Activated CD4-positive, alpha-beta T cell treated with anti-CD3 and anti-CD28 coated beads, Interleukin-2, amount 10 ng/mL, durations not matched to agents 24 days and 14 days (primary cell): ENCODE measurements at regions of chr5 and their contacts with region 1.

Region 1: DNA sequence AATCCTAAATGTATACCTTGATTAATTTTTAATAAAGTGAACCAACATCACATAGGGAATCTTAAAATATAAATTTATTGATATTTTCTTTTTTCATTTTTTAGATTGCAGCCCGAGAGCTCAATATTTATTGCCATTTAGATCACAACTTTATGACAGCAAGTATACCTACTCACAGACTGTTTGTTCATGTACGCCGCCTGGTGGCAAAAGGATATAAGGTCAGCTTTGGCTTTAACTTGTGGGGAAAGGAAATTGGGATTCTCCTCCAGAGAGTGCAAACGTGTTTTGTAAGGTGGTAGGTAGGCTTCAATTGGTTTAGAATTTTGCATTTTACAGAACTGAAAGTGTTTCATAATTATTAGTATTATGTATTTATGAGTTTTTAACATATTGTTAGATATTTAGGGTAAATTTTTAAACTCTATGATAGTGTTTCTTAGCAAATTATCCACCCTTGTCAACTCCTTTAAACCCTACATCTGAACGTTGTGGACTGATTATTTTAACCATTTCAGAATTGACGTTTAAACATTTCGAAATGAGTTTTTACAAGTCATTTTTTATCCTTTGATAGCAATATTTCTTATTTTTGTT is 17.5 kb upstream of the DHFR start:
- DNase-seq: peak; percentile 89
- H3K4me3 Mint-ChIP-seq: no peak overlapping the region
- H3K27ac Mint-ChIP-seq: no peak overlapping the region
- H3K4me1 Mint-ChIP-seq: peaks cover 10% of the 10 kb centered on the region
- H3K27me3 Mint-ChIP-seq: no peaks in the 10 kb centered on the region

Region 2: GRCh38 chr5:80090884-80091166 is 581.4 kb before region 1 on chr5:
- intact Hi-C with region 1: loop called (anchors 2 kb)
- DNase-seq: no peak
- H3K4me3 Mint-ChIP-seq: no peak overlapping the region
- H3K27ac Mint-ChIP-seq: no peak overlapping the region
- H3K4me1 Mint-ChIP-seq: peaks cover 12% of the 10 kb centered on the region
- H3K27me3 Mint-ChIP-seq: no peaks in the 10 kb centered on the region

Region 3: GRCh38 chr5:80346055-80346454 is 326.2 kb before region 1 on chr5:
- intact Hi-C with region 1: loop called (anchors 5 kb)
- DNase-seq: peak; percentile 76
- H3K4me3 Mint-ChIP-seq: no peak overlapping the region
- H3K27ac Mint-ChIP-seq: no peak overlapping the region
- H3K4me1 Mint-ChIP-seq: no peaks in the 10 kb centered on the region
- H3K27me3 Mint-ChIP-seq: peaks cover 4% of the 10 kb centered on the region

Region 4: GRCh38 chr5:80481019-80481893 is 191.0 kb before region 1 on chr5:
- intact Hi-C with region 1: loop called (anchors 1 kb)
- DNase-seq: peak; percentile 82
- H3K4me3 Mint-ChIP-seq: no peak overlapping the region
- H3K27ac Mint-ChIP-seq: no peak overlapping the region
- H3K4me1 Mint-ChIP-seq: peaks cover 2% of the 10 kb centered on the region
- H3K27me3 Mint-ChIP-seq: peaks cover under 1% of the 10 kb centered on the region

Region 5: GRCh38 chr5:80711938-80712337 is 39.7 kb after region 1 on chr5:
- intact Hi-C with region 1: no loop called
- DNase-seq: no peak
- H3K4me3 Mint-ChIP-seq: no peak overlapping the region
- H3K27ac Mint-ChIP-seq: no peak overlapping the region
- H3K4me1 Mint-ChIP-seq: peaks cover 31% of the 10 kb centered on the region
- H3K27me3 Mint-ChIP-seq: no peaks in the 10 kb centered on the region